Panc1 (cell line): ENCODE measurements at regions of chr21 and their contacts with region 1.

Region 1: DNA sequence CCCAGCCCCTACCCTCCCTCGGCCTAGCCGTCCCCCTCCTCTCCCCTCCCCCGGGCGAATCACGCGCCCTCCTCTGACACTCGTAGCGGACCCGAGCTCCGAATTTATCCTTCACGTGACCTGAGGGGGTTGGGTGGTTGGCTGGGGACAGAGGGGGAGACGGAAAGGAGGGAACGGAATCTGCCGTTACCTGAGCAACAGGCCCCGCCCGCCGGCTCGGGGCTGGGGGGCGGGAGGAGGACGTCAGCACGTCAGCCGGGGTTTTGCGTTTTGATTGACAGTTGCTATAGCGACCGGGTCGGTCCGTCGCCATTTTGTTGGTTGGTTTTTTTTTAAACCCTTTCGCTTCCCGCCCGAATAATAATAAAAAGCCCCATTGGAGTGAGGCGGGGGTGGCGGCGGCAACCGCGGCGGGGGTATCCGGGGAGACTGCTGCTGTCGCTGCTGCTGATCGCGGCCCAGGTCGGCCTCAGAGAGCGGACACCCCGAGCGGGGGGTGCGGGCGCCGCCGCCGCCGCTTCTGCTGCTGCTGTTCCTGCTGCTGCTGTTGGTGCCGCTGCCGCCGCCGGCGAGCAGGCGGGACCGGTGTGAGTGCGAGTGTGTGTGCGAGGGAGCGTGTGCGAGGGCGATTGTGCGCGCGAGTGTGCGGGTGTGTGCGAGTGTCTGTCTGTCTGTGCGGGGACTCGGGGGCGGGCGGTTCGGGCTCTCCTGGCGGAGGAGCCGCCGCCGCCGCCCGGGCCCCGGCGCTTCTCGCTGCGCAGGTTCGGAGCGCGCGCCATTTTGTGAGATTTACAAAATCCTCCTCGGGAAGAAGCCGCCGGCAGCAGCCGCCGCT is at the start of gene DYRK1A:
- DNase-seq: peak; percentile 90
- ATAC-seq: peak; percentile 88
- H3K4me3 ChIP-seq: peak within 1 kb of the TSS; percentile 73 to 78
- H3K27ac ChIP-seq: peak within 1 kb of the TSS; percentile 99
- H3K4me1 ChIP-seq: peaks cover 28% of the 10 kb centered on the region
- H3K27me3 ChIP-seq: no peaks in the 10 kb centered on the region
- CTCF ChIP-seq: no peak
- total RNA-seq, gene DYRK1A: 36.1 TPM

Region 2: DNA sequence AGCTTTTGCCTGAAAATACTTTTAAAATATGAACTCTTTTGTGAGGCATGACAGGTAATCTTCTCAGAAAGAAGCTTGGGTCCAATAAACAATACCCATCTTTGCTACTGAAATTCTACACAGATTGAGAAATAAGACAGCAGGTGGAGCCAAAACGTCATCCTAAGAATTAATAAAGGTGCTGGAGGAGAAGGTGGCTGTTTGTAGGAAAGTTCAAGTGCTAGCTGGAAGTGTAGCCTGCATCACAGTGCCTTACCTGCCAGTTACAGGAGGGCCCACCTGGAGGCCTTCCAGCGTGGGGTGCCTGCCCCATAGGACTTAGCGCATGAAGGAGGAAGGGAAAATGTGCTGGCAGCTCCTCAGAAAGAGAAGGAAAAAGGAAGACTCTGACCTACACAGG is 200.0 kb before region 1 on chr21:
- CTCF ChIA-PET with region 1: no interaction called
- POLR2A ChIA-PET with region 1: no interaction called
- in situ Hi-C with region 1: no loop called
- intact Hi-C with region 1: no loop called
- DNase-seq: no peak
- ATAC-seq: no peak
- H3K4me3 ChIP-seq: no peak overlapping the region
- H3K27ac ChIP-seq: no peak overlapping the region
- H3K4me1 ChIP-seq: no peaks in the 10 kb centered on the region
- H3K27me3 ChIP-seq: no peaks in the 10 kb centered on the region
- CTCF ChIP-seq: peak; percentile 44

Region 3: DNA sequence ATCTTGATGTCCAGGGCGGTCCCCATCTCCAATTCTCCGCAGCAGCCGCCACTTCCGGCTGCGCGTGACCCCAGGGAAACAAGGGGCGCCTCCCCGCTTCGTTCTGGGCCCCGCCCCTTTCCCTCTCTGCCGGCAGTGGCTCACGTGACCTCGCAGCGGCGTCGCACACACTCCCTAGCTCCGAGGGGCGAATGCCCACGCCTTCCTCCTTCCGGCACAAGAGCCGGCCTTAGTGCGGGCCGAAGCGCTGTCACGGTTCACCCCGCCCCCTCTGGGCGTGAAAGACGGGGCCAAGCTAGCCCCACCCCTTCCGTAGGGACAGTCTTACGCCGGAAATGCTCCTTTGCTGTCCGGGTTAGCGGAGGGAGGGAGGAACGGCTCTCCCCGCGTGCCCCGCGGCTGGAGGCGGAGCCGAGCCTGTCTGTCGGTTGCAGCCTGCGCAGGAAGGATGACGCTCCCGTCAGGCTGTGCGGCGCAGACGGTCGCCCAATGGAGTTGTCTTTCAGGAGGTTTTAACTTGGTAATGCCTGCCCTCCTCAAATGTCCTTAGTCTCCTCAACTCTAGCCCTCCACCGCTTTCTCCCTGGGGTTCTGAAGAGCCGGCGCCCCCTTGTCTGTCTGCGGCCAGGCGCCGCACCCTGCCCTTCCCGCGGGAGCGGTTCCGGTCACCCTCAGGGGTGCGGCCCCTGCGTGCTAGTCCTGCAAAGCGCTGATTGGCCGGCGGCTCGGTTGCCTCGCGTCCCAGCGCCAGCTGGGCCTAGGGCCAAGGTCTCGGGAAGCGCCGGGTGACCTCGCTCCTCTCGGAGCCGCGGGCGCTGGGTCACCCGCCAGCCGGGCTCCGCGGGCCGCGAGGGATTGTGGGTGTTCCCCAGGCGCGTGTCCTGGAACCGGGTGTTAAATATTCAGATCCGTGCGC is 99.2 kb before region 1 on chr21 and contains the start of gene VPS26C:
- CTCF ChIA-PET with region 1: no interaction called
- POLR2A ChIA-PET with region 1: interaction called, 3 read pairs
- in situ Hi-C with region 1: no loop called
- intact Hi-C with region 1: loop called (anchors 5 kb)
- DNase-seq: peak; percentile 96
- ATAC-seq: peak; percentile 94
- H3K4me3 ChIP-seq: peak within 1 kb of the TSS; percentile 70 to 83
- H3K27ac ChIP-seq: peak within 1 kb of the TSS; percentile 94
- H3K4me1 ChIP-seq: peaks cover 22% of the 10 kb centered on the region
- H3K27me3 ChIP-seq: no peaks in the 10 kb centered on the region
- CTCF ChIP-seq: no peak
- total RNA-seq, gene VPS26C: 47.4 TPM

Region 4: GRCh38 chr21:37452227-37452626 is 85.5 kb after region 1 on chr21:
- CTCF ChIA-PET with region 1: no interaction called
- POLR2A ChIA-PET with region 1: no interaction called
- in situ Hi-C with region 1: no loop called
- intact Hi-C with region 1: loop called (anchors 5 kb)
- DNase-seq: no peak
- ATAC-seq: peak; percentile 77
- H3K4me3 ChIP-seq: no peak overlapping the region
- H3K27ac ChIP-seq: no peak overlapping the region
- H3K4me1 ChIP-seq: peaks cover 28% of the 10 kb centered on the region
- H3K27me3 ChIP-seq: no peaks in the 10 kb centered on the region
- CTCF ChIP-seq: no peak